PC-3 (cell line): ENCODE measurements at regions of chr6 and their contacts with region 1.

Region 1: GRCh38 chr6:25312703-25313501 is 33.7 kb downstream of the CARMIL1 start:
- DNase-seq: peak; percentile 82
- ATAC-seq: peak; percentile 75
- H3K4me3 ChIP-seq: peak overlapping the region; percentile 61
- H3K27ac ChIP-seq: peak overlapping the region; percentile 85
- H3K4me1 ChIP-seq: peaks cover 38% of the 10 kb centered on the region
- H3K27me3 ChIP-seq: no peaks in the 10 kb centered on the region
- CTCF ChIP-seq: no peak; the same call in 1 of the 2 replicates

Region 2: DNA sequence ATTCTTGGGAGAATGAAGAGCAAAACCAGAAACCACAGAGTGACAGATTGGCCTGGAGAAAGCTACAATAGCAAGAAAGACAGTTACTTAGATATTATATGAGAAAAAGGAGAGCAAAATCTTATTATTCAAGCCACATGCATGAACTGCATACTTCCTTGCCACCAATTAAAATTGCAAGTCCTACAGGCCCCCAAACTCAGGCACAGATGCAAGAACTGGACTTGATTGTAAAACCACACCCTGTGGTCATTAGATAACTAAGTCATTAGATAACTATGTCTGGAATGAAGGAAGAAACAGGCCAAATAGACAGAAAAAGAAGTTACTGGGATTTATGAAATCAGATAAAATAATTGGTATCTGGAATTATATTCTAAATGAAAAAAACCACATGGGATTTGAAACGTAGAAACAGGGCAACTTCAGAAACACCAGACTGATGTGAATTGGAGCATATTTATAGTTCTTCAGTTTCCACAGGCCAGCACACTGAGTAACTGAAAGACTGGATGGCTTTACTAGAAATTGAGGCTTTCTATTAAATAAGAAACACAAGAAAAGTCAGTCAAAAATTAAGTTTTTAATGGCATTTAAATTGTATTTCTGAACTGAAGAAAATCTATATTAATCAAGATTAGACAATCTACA is 83.1 kb before region 1 on chr6:
- CTCF ChIA-PET with region 1: no interaction called
- POLR2A ChIA-PET with region 1: no interaction called
- intact Hi-C with region 1: loop called (anchors 1 kb)
- DNase-seq: peak; percentile 74
- ATAC-seq: peak; percentile 90
- H3K4me3 ChIP-seq: no peak overlapping the region
- H3K27ac ChIP-seq: peak overlapping the region; percentile 18
- H3K4me1 ChIP-seq: peaks cover 20% of the 10 kb centered on the region
- H3K27me3 ChIP-seq: no peaks in the 10 kb centered on the region
- CTCF ChIP-seq: no peak

Region 3: DNA sequence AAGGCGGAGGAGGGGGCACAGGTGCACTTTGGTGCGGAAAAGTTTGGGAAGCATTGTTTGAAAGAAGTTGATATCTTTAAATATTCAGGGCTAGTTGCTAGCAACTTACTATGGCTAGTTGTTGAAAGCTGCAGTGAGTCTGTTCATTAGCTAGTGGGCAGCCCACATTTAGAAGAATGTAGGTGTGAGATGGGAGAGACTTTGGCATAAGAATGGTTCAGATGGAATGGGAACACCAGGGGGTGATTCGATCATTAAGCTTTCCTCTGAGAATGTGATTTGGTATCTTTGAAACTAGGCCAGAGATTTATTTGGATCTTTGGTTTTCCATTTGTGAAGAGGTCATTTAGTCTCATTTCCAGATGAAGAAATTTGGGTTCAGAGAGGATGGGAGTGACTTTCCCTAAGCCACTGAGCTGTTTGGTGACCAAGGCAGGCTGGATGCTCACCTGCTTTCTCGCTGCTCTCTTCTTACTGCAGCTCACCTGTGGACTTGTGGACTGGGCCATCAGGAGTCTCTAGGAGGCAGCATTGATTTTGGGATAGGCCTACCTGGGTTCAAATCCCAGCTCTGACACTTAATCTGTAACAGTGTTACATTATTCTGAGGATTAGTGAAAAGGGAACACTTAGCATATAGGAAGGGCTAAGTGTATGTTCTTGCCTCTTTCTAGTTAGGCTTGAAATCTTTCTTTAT is 29.2 kb after region 1 on chr6:
- CTCF ChIA-PET with region 1: interaction called, 12 read pairs
- POLR2A ChIA-PET with region 1: no interaction called
- intact Hi-C with region 1: no loop called
- DNase-seq: no peak
- ATAC-seq: no peak
- H3K4me3 ChIP-seq: no peak overlapping the region
- H3K27ac ChIP-seq: no peak overlapping the region
- H3K4me1 ChIP-seq: no peaks in the 10 kb centered on the region
- H3K27me3 ChIP-seq: no peaks in the 10 kb centered on the region
- CTCF ChIP-seq: no peak

Region 4: DNA sequence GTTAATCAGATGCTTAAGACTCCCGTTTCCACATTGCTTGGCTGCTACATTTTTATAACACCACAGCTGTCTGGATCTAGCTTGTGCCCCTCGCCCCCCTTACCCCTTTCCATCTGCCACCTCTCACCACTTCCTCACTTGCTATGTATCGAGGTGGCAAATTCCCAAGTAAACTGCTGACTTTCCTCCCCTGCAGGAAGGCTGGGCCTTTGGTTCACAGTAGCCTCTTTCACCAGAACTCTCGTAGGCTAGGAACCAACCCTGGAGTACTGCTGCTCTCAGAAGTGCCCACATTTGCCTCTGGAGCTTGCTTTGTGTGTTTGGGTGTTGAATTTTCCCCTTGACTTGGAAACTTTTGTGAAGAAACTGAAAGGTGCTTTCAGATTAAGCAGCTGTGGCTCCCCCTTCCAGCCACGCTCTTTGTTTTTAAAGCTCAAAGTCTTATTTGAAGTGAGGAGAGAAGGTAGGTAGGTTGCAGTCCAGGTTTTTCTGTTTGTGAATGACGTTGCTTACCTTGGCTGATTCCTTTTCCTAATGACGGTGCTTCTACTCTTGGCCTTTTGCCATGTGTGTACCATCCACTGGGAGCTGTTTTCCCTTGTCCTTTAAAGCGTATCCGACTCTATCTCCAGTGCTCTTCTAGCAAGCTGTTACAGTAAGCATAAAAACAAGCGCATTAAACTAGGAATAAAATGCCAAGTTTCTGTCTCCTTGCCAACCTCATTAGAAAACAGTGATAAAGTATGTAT is 56.7 kb after region 1 on chr6:
- CTCF ChIA-PET with region 1: no interaction called
- POLR2A ChIA-PET with region 1: no interaction called
- intact Hi-C with region 1: no loop called
- DNase-seq: no peak
- ATAC-seq: no peak
- H3K4me3 ChIP-seq: no peak overlapping the region
- H3K27ac ChIP-seq: no peak overlapping the region
- H3K4me1 ChIP-seq: peaks cover 11% of the 10 kb centered on the region
- H3K27me3 ChIP-seq: no peaks in the 10 kb centered on the region
- CTCF ChIP-seq: no peak

Region 5: DNA sequence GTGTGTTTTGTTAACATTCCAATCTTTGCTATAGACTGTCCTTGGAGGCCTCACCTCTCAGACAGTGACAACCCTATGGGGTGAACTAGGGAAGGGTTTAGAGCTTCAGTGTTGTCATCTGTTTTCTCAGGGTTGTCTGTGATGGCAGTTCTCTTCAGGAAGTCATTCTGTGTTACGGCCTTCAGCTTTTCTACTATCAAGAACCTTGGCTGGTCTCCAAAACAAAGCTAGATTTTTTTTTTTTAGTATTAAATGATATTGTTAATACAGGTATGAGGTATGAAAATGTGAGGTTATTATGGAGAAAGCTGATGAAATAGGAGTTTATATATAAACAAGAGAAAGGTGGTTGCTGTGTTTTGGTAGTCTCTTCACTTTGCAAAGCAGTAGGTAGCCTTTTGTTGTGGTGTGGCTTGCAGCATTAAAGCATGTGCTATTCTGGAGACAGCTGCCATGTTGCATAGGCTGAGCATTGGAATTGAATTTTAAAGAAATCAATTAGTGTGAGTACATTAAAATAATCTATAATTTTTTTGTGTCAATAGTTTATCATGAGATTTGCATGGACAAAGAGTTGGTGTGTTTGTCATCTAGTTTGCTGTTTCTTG is 128.9 kb after region 1 on chr6:
- CTCF ChIA-PET with region 1: no interaction called
- POLR2A ChIA-PET with region 1: interaction called, 10 read pairs
- intact Hi-C with region 1: no loop called
- DNase-seq: no peak
- ATAC-seq: no peak
- H3K4me3 ChIP-seq: no peak overlapping the region
- H3K27ac ChIP-seq: no peak overlapping the region
- H3K4me1 ChIP-seq: peaks cover 16% of the 10 kb centered on the region
- H3K27me3 ChIP-seq: no peaks in the 10 kb centered on the region
- CTCF ChIP-seq: no peak

Region 6: GRCh38 chr6:25476126-25476525 is 163.2 kb after region 1 on chr6:
- CTCF ChIA-PET with region 1: no interaction called
- POLR2A ChIA-PET with region 1: interaction called, 15 read pairs
- intact Hi-C with region 1: no loop called
- DNase-seq: peak; percentile 82
- ATAC-seq: peak; percentile 90
- H3K4me3 ChIP-seq: no peak overlapping the region
- H3K27ac ChIP-seq: peak overlapping the region; percentile 56
- H3K4me1 ChIP-seq: peaks cover 24% of the 10 kb centered on the region
- H3K27me3 ChIP-seq: no peaks in the 10 kb centered on the region
- CTCF ChIP-seq: no peak